ENCODE measurements at regions of chr2 and their contacts with region 1.

Region 1: DNA sequence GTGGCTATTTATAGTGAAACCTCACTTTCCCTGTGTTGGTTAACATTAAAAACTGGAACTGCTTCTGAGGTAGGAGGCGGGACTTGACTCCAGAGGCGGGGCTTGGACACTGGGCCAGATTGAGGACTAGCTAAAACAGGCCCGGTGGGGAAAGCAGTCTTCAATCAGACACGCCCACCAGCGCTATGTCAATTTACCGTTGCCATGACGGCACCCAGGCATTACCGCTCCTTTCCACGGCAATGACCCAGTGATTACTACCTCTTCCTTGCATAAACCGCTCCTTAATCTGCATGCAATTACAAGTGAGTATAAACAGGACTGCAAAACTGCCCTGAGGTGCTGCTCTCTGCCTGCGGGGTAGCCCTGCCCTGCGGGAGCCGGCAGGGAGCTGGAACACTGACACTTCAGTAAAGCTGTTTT is 35.3 kb downstream of the LRRFIP1 start:
- DNase-seq: peak; percentile 94
- H3K4me3 ChIP-seq: no peak overlapping the region
- H3K27ac ChIP-seq: peak overlapping the region; percentile 70 to 79 (median 78)
- H3K4me1 ChIP-seq: peaks cover 17 to 36% (median 26%) of the 10 kb centered on the region in 4 donors
- H3K27me3 ChIP-seq: no peaks in the 10 kb centered on the region
- CTCF ChIP-seq: peak in 1 of 5 experiments; percentile 14
- EP300 ChIP-seq: peak; percentile 43
- POLR2A ChIP-seq: no peak

Region 2: GRCh38 chr2:237627441-237628246 is 35.0 kb before region 1 on chr2 and contains the start of gene LRRFIP1:
- in situ Hi-C with region 1: no loop called
- intact Hi-C with region 1: loop called (anchors 5 kb)
- DNase-seq: peak; percentile 20
- H3K4me3 ChIP-seq: peak within 1 kb of the TSS; percentile 57 to 73 (median 67)
- H3K27ac ChIP-seq: peak within 1 kb of the TSS; percentile 59 to 72 (median 63)
- H3K4me1 ChIP-seq: peaks cover 9 to 22% (median 13%) of the 10 kb centered on the region in 4 donors
- H3K27me3 ChIP-seq: peaks cover 24% of the 10 kb centered on the region
- CTCF ChIP-seq: no peak
- EP300 ChIP-seq: no peak
- POLR2A ChIP-seq: no peak
- total RNA-seq, gene LRRFIP1: 98.5 to 147 (median 122) TPM